ENCODE measurements at regions of chr14 and their contacts with region 1.

Region 1: DNA sequence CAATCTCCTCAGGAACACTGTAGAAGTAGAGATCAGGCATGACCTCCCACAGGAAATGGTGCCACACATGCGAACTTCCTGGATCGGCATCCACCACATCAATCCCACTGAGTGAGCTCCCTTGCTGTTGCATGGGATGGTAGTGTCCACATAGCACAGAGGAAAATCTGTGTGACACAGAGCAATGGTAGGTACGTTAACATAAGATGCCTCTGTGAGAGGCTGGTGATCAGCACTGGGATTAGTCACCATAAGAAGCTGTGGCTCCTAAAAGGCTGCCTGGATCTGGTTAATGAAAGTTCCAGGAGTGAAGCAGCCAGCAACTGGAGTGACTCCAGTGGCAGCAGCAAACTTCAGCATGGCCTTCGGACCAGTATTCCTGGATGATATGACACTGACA is 21.8 kb downstream of the WDHD1 start:
- DNase-seq: no peak

Region 2: DNA sequence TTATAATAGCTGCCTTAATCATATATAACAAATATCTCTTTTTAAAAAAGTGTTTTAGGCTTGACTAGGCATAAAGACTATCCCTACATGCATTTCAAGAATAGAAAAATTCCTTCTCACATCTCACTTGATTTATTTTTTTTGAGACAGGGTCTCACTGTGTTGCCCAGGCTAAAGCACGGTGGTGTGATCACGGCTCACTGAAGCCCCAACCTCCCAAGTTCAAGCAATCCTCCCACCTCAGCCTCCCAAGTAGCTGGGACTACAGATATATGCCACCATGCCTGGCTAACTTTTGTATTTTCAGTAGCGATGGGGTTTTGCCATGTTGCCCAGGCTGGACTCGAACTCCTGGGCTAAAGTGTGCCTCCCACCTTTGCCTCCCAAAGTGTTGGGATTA is 37.6 kb before region 1 on chr14:
- intact Hi-C with region 1: no loop called
- DNase-seq: no peak

Region 3: DNA sequence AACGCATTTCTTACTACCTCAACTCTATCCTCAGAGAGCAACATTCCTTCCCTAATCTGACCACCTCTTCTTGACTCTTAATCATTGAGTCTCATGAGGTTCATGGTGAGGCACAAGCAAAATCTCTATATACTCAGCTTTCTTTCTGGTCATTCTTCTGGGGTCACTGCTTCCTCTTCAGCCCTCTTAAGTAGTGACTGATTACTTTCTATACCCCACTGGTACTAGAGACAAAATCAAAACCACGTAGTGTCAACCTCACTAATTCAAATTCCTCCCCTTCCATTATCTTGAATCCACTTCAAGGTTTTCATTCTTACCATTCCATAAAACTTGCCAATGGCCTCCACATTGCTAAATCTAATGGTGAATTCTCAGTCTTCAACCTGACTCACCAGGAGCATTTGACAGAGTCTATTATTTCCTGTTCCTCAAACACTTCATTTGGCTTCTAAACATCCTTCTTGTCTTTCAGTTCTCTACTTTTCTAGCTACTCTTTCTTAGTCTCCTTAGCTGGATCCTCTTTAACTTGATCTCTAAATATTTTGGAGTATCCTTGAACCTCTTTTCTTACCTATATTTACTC is 15.0 kb after region 1 on chr14:
- intact Hi-C with region 1: loop called in 1 of 2 experiments (anchors 1 kb)
- DNase-seq: no peak

Region 4: GRCh38 chr14:55152052-55152753 is 147.1 kb after region 1 on chr14:
- intact Hi-C with region 1: no loop called
- DNase-seq: no peak

Measured in posterior vena cava (tissue), 2 donors.